ENCODE measurements at regions of chr6 and their contacts with region 1.

Region 1: DNA sequence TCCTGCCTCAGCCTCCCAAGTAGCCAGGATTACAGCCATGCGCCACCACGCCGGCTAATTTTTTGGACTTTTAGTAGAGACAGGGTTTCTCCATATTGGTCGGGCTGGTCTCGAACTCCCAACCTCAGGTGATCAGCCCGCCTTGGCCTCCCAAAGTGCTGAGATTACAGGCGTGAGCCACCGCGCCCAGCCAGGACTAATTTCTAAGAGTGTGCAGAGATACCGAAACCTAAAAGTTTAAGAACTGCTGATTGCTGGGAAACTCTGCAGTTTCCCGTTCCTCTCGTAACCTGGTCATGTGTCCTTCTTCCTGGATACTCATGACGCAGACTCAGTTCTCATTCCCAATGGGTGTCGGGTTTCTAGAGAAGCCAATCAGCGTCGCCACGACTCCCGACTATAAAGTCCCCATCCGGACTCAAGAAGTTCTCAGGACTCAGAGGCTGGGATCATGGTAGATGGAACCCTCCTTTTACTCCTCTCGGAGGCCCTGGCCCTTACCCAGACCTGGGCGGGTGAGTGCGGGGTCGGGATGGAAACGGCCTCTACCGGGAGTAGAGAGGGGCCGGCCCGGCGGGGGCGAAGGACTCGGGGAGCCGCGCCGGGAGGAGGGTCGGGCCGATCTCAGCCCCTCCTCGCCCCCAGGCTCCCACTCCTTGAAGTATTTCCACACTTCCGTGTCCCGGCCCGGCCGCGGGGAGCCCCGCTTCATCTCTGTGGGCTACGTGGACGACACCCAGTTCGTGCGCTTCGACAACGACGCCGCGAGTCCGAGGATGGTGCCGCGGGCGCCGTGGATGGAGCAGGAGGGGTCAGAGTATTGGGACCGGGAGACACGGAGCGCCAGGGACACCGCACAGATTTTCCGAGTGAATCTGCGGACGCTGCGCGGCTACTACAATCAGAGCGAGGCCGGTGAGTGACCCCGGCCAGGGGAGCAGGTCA is at the start of gene HLA-E:
- DNase-seq: peak; percentile 88 to 94 (median 91)
- ATAC-seq: peak; percentile 89 to 93 (median 92)
- H3K4me3 ChIP-seq: peak within 1 kb of the TSS; percentile 81 to 93 (median 89)
- H3K27ac ChIP-seq: peak within 1 kb of the TSS; percentile 93 to 99 (median 99)
- H3K4me1 ChIP-seq: peaks cover 0 to 8% (median 4%) of the 10 kb centered on the region in 4 donors
- H3K27me3 ChIP-seq: no peaks in the 10 kb centered on the region
- CTCF ChIP-seq: no peak
- POLR2A ChIP-seq: peak; percentile 98
- total RNA-seq, gene HLA-E: 116 to 257 (median 183) TPM

Region 2: GRCh38 chr6:30037182-30037788 is 452.1 kb before region 1 on chr6:
- intact Hi-C with region 1: no loop called
- DNase-seq: no peak
- ATAC-seq: peak; percentile 61 to 73 (median 66)
- H3K4me3 ChIP-seq: no peak overlapping the region
- H3K27ac ChIP-seq: no peak overlapping the region
- H3K4me1 ChIP-seq: peaks cover 0 to 8% (median 0%) of the 10 kb centered on the region in 4 donors
- H3K27me3 ChIP-seq: no peaks in the 10 kb centered on the region
- CTCF ChIP-seq: peak; percentile 50 to 53 (median 52)
- POLR2A ChIP-seq: no peak

Region 3: DNA sequence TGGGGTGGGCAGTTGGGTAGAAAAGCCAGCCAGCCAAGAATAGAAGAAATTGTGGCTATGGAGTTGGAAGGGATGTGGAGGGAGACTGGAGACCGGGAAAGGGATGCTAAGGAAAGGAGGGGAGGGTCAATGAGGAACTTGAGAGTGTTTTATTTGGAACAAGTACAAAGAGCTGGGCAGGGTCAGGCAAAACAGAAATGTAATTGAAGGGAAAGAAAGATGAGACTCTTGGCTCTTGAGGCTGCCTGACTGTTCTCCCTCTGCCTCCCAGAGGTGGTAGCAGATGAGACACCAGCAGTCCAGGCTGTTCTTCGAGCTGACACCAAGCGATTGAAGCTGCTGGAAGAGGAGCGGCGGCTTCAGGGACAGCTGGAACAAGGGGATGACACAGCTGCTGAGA is 94.6 kb after region 1 on chr6:
- intact Hi-C with region 1: no loop called
- DNase-seq: no peak
- ATAC-seq: no peak
- H3K4me3 ChIP-seq: no peak overlapping the region
- H3K27ac ChIP-seq: no peak overlapping the region
- H3K4me1 ChIP-seq: no peaks in the 10 kb centered on the region
- H3K27me3 ChIP-seq: no peaks in the 10 kb centered on the region
- CTCF ChIP-seq: no peak
- POLR2A ChIP-seq: no peak

Region 4: DNA sequence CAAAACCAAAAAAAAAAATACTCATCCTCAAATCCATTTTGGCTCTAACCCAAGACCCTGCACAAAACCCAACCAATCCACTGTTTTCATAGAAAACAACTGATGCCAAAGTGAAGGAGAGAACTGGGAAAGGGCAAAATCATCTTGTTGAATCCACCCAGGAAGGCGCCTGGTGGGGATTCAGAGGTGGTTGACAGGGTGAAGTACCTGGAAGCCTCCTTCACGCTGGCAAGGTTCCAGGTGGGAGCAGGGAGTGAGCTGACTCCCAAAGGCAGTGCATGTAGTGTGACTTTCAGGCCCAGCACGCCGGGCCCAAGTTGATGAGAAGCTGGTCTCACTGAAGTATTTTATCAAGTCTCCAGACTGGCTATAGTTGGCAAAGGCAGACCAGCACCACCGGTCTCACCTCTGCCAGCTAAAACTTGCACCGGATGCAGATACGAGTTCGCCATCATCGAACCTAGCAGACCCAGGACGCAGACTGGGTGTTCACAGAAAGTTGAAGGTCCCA is 111.2 kb after region 1 on chr6:
- intact Hi-C with region 1: loop called in 1 of 2 experiments (anchors 10 kb)
- DNase-seq: peak in 2 of 3 donors; percentile 40 to 57
- ATAC-seq: peak in 1 of 4 donors; percentile 7
- H3K4me3 ChIP-seq: no peak overlapping the region
- H3K27ac ChIP-seq: no peak overlapping the region
- H3K4me1 ChIP-seq: no peaks in the 10 kb centered on the region
- H3K27me3 ChIP-seq: no peaks in the 10 kb centered on the region
- CTCF ChIP-seq: no peak
- POLR2A ChIP-seq: no peak

Region 5: DNA sequence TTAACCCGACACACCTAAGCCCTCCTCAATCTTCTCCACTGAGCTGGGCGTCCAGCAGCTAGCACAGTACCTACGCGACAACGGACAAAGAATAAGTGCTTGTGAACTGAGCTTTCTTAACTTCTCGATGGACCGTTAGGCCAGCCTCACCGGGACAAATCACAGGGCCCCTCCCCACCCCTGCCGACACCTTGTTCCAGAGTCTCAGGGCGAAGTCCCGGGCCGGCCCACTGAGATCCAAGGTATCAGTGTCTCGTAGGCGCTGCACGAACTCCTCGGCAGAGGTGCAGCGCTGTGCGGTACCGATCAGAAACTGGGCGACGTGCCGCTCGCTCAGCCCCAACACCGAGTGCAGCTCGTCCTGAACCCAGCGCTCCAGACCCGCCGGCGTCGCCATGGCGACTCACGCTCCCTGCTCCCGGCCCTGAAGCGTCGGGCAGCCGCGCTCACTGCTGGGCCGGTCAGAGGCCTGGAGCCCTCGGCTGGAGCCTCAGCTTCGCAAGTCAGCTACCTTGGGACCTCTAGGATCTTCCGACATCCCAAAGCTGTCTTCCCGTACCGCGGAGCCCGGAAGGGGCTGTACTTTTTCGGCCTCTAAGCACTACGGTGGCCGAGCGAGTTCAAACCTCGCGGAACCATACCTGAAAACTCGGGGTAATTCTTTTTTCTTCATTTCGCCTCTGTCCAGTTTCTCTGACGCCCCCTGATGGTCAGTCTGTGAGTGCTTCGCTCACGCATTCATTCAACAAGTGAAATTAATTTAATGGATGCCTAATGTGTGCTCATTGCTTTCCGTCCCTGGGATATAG is 183.3 kb after region 1 on chr6 and contains the start of gene DHX16:
- intact Hi-C with region 1: loop called in 1 of 2 experiments (anchors 10 kb)
- DNase-seq: peak; percentile 93 to 96 (median 94)
- ATAC-seq: peak; percentile 84 to 89 (median 84)
- H3K4me3 ChIP-seq: peak within 1 kb of the TSS; percentile 91 to 100 (median 100)
- H3K27ac ChIP-seq: peak within 1 kb of the TSS; percentile 54 to 60 (median 58)
- H3K4me1 ChIP-seq: peaks cover 0 to 45% (median 10%) of the 10 kb centered on the region in 4 donors
- H3K27me3 ChIP-seq: no peaks in the 10 kb centered on the region
- CTCF ChIP-seq: peak; percentile 82 to 89 (median 86)
- POLR2A ChIP-seq: peak; percentile 44
- total RNA-seq, gene DHX16: 12.3 to 17.8 (median 14.4) TPM

Measured in right lobe of liver (tissue), 6 donors.